ENCODE measurements at regions of chrX and their contacts with region 1.

Region 1: DNA sequence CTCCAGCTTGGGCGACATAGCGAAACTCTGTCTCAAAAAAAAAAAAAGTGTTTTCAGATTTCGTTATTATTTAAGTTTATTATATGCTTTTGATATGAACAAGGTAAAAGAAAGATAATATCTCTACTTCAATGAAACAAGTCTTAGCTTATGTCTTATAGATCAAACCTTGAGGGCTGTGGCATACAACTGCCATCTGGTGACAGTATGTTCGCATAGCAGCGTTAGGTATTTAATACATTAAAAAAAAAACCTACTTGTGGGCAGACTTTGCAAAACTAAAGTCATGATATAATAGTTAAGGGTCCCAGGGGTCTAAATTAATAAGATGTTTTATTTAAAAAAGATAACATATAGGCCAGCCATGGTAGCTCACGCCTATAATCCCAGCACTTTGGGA is 161.2 kb upstream of the AMOT start:
- DNase-seq: no peak
- H3K4me3 ChIP-seq: no peak overlapping the region
- H3K4me3 Mint-ChIP-seq: no peak overlapping the region
- H3K27ac Mint-ChIP-seq: no peak overlapping the region
- H3K4me1 ChIP-seq: peaks cover 14% of the 10 kb centered on the region
- H3K4me1 Mint-ChIP-seq: peaks cover 25% of the 10 kb centered on the region
- H3K27me3 ChIP-seq: no peaks in the 10 kb centered on the region
- H3K27me3 Mint-ChIP-seq: no peaks in the 10 kb centered on the region
- CTCF ChIP-seq: peak in 1 of 2 experiments; percentile 14

Region 2: GRCh38 chrX:112760697-112761096 is 241.1 kb before region 1 on chrX:
- CTCF ChIA-PET with region 1: interaction called, 3 read pairs
- POLR2A ChIA-PET with region 1: no interaction called
- intact Hi-C with region 1: loop called (anchors 1 kb)
- DNase-seq: no peak
- H3K4me3 ChIP-seq: no peak overlapping the region
- H3K4me3 Mint-ChIP-seq: no peak overlapping the region
- H3K27ac Mint-ChIP-seq: no peak overlapping the region
- H3K4me1 ChIP-seq: no peaks in the 10 kb centered on the region
- H3K4me1 Mint-ChIP-seq: peaks cover 7% of the 10 kb centered on the region
- H3K27me3 ChIP-seq: no peaks in the 10 kb centered on the region
- H3K27me3 Mint-ChIP-seq: no peaks in the 10 kb centered on the region
- CTCF ChIP-seq: no peak

Region 3: GRCh38 chrX:112851806-112852205 is 150.0 kb before region 1 on chrX:
- CTCF ChIA-PET with region 1: no interaction called
- POLR2A ChIA-PET with region 1: interaction called, 3 read pairs
- intact Hi-C with region 1: loop called (anchors 5 kb)
- DNase-seq: no peak
- H3K4me3 ChIP-seq: no peak overlapping the region
- H3K4me3 Mint-ChIP-seq: peak overlapping the region; percentile 47
- H3K27ac Mint-ChIP-seq: peak overlapping the region; percentile 64
- H3K4me1 ChIP-seq: peaks cover 23% of the 10 kb centered on the region
- H3K4me1 Mint-ChIP-seq: peaks cover 39% of the 10 kb centered on the region
- H3K27me3 ChIP-seq: no peaks in the 10 kb centered on the region
- H3K27me3 Mint-ChIP-seq: no peaks in the 10 kb centered on the region
- CTCF ChIP-seq: no peak

Region 4: GRCh38 chrX:112874175-112874574 is 127.7 kb before region 1 on chrX:
- CTCF ChIA-PET with region 1: interaction called, 4 read pairs
- POLR2A ChIA-PET with region 1: no interaction called
- intact Hi-C with region 1: loop called (anchors 1 kb)
- DNase-seq: no peak
- H3K4me3 ChIP-seq: no peak overlapping the region
- H3K4me3 Mint-ChIP-seq: no peak overlapping the region
- H3K27ac Mint-ChIP-seq: no peak overlapping the region
- H3K4me1 ChIP-seq: 0 out of 2 replicates have a peak, but pooled peaks cover 5% of the 10 kb centered on the region
- H3K4me1 Mint-ChIP-seq: no peaks in the 10 kb centered on the region
- H3K27me3 ChIP-seq: no peaks in the 10 kb centered on the region
- H3K27me3 Mint-ChIP-seq: no peaks in the 10 kb centered on the region
- CTCF ChIP-seq: peak in 1 of 2 experiments; percentile 7

Region 5: GRCh38 chrX:112910418-112910817 is 91.4 kb before region 1 on chrX:
- CTCF ChIA-PET with region 1: interaction called, 4 read pairs
- POLR2A ChIA-PET with region 1: no interaction called
- intact Hi-C with region 1: loop called (anchors 2 kb)
- DNase-seq: no peak
- H3K4me3 ChIP-seq: no peak overlapping the region
- H3K4me3 Mint-ChIP-seq: no peak overlapping the region
- H3K27ac Mint-ChIP-seq: no peak overlapping the region
- H3K4me1 ChIP-seq: no peaks in the 10 kb centered on the region
- H3K4me1 Mint-ChIP-seq: no peaks in the 10 kb centered on the region
- H3K27me3 ChIP-seq: no peaks in the 10 kb centered on the region
- H3K27me3 Mint-ChIP-seq: no peaks in the 10 kb centered on the region
- CTCF ChIP-seq: no peak

Region 6: GRCh38 chrX:112967326-112967725 is 34.5 kb before region 1 on chrX:
- CTCF ChIA-PET with region 1: interaction called, 3 read pairs
- POLR2A ChIA-PET with region 1: no interaction called
- intact Hi-C with region 1: loop called (anchors 1 kb)
- DNase-seq: peak; percentile 36 to 37
- H3K4me3 ChIP-seq: no peak overlapping the region
- H3K4me3 Mint-ChIP-seq: peak overlapping the region; percentile 28
- H3K27ac Mint-ChIP-seq: no peak overlapping the region
- H3K4me1 ChIP-seq: peaks cover 61% of the 10 kb centered on the region
- H3K4me1 Mint-ChIP-seq: no peaks in the 10 kb centered on the region
- H3K27me3 ChIP-seq: no peaks in the 10 kb centered on the region
- H3K27me3 Mint-ChIP-seq: no peaks in the 10 kb centered on the region
- CTCF ChIP-seq: no peak